Dendritic cell treated with granulocyte-macrophage colony-stimulating factor and Interleukin-4, amounts not matched to agents 40 ng/mL and 50 ng/mL, for 4 days (primary cell): ENCODE measurements at regions of chr6 and their contacts with region 1.

Region 1: DNA sequence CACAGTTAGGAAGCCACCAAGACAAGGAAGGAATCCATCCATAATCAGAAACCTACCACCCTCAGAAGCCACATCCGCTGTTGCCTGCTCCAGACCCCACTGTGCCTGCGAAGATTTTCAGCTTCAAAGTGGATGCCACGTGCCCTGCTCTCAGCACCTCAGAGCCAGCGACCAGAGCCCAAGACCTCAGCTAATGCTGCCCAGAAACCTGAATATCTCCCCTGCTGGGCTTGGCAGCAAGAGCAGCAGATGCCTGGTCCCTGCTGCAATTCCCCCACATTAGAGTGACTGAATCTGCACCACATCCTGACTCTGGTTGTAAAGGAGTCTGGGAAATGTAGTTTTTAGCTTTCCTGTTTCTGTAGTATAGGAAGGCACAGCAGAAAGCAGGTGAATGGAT is 10.7 kb upstream of the ULBP3 start:
- H3K4me3 Mint-ChIP-seq: no peak overlapping the region
- H3K27ac Mint-ChIP-seq: no peak overlapping the region
- H3K4me1 Mint-ChIP-seq: no peaks in the 10 kb centered on the region
- H3K27me3 Mint-ChIP-seq: peaks cover 25% of the 10 kb centered on the region

Region 2: GRCh38 chr6:150025201-150025917 is 54.2 kb before region 1 on chr6 and contains the start of gene RAET1L:
- intact Hi-C with region 1: no loop called
- H3K4me3 Mint-ChIP-seq: peak within 1 kb of the TSS; percentile 28
- H3K27ac Mint-ChIP-seq: no peak within 1 kb of the TSS
- H3K4me1 Mint-ChIP-seq: peaks cover 9% of the 10 kb centered on the region
- H3K27me3 Mint-ChIP-seq: peaks cover 68% of the 10 kb centered on the region

Region 3: GRCh38 chr6:150046943-150047342 is 32.7 kb before region 1 on chr6:
- intact Hi-C with region 1: no loop called
- H3K4me3 Mint-ChIP-seq: no peak overlapping the region
- H3K27ac Mint-ChIP-seq: no peak overlapping the region
- H3K4me1 Mint-ChIP-seq: no peaks in the 10 kb centered on the region
- H3K27me3 Mint-ChIP-seq: peaks cover 31% of the 10 kb centered on the region

Region 4: DNA sequence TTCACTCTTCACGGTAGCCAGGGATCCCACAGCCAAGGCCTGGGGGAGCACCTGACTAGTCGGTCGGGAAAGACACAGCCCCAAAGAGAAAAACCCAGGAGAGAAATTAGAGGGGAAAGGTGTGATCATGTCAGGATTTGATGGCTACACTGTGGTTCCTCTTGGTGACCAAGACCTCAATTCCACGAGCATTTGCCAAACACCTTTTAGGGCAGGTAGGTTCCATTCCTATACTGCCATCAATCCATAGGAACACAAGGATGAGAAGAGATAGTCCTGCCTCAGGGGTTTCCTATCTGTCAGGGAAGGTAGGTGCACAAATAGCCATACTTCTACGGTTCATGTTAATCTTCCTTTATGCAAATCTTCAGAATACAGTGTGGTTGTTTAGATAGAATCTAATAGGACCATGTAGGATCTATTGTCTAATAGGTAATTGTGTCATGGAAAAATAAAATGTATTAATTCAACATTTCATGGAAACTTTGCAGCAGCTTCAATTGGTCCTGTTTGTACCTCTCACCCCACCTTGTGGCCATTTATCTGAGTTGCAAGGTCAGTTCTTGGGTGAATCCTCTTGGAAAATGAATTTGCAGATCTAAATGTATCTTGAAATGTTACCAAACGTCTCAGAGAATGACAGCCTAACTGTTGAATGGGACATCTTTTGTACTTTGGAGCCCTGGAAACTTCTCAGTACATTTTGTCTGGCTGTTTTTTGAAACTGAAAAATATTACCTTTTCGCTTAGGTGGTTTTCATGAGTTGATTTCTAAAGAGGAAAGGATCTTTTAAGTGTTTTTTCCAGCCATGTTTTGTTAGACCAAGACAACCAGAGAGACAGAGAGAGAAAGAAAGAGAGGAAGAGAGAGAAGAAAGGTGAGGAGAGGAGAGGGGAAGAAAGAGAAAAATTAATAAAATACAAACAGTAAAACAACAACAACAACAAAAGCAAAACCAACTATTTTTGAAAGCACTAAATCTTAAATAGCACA is 255.5 kb after region 1 on chr6:
- intact Hi-C with region 1: loop called (anchors 1 kb)
- H3K4me3 Mint-ChIP-seq: no peak overlapping the region
- H3K27ac Mint-ChIP-seq: no peak overlapping the region
- H3K4me1 Mint-ChIP-seq: no peaks in the 10 kb centered on the region
- H3K27me3 Mint-ChIP-seq: peaks cover 5% of the 10 kb centered on the region

Region 5: DNA sequence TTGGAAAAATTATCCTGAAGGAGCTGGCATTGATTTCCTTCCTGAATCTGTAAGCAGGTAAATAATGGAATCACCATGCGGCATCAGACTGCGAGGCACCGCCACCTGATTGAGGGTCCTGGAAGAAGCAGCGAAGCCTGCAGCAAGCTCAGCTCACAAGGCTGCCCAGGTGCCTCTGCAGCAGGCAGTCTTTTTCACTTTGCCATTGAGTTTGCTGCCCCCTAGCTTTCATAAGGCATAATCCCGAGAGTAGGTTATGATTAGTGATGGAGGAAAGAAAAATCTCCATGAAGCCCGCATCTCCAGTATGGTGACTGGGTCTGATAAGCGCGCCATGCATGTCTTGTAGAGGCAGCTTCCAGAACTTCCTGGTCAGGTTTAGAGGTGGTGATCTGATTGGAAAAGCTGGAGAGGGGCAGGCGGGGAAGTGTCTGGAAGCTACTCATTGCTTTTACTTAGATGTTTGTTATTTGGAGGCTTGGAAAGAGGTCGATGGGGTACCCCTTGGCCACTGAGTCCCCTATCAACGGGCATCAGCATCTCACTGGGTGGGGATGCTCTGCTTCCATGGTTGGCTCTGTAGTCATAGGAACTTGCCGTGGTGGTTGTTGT is 315.9 kb after region 1 on chr6:
- intact Hi-C with region 1: loop called (anchors 2 kb)
- H3K4me3 Mint-ChIP-seq: no peak overlapping the region
- H3K27ac Mint-ChIP-seq: no peak overlapping the region
- H3K4me1 Mint-ChIP-seq: no peaks in the 10 kb centered on the region
- H3K27me3 Mint-ChIP-seq: peaks cover 2% of the 10 kb centered on the region